ENCODE measurements at regions of chr2 and their contacts with region 1.

Region 1: GRCh38 chr2:234135720-234136221 is 85.3 kb downstream of the SPP2 start:
- DNase-seq: peak; percentile 64
- H3K4me3 Mint-ChIP-seq: no peak overlapping the region
- H3K27ac Mint-ChIP-seq: peak overlapping the region; percentile 61
- H3K4me1 Mint-ChIP-seq: peaks cover 29% of the 10 kb centered on the region
- H3K27me3 Mint-ChIP-seq: peaks cover 11% of the 10 kb centered on the region

Region 2: DNA sequence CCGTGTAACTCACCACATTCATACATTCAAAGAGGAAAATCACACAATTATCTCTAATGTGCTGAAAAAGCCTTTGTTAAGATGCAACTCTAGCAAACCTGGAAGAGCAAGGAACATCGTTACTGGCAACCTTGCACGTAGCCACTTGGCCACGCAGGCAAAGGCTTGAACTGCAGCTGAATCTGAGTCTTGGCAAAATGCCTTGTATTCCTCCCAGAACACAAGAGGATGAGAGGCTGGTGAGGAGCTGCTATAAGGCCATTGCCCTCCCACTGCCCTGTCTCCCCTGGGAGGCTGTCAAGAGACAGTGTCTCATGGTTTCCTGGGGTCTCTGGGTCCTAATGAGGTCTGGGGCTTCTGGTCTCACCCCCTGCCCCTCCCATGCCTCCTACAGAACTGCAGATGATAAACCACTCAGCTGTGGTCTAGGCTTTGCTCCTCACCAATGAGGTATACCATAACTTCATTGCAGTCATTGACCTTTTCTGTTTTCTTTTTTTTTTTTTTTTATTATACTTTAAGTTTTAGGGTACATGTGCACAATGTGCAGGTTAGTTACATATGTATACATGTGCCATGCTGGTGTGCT is 56.1 kb after region 1 on chr2:
- CTCF ChIA-PET with region 1: no interaction called
- POLR2A ChIA-PET with region 1: no interaction called
- DNase-seq: no peak
- H3K4me3 Mint-ChIP-seq: no peak overlapping the region
- H3K27ac Mint-ChIP-seq: no peak overlapping the region
- H3K4me1 Mint-ChIP-seq: peaks cover 2% of the 10 kb centered on the region
- H3K27me3 Mint-ChIP-seq: peaks cover 18% of the 10 kb centered on the region

Region 3: DNA sequence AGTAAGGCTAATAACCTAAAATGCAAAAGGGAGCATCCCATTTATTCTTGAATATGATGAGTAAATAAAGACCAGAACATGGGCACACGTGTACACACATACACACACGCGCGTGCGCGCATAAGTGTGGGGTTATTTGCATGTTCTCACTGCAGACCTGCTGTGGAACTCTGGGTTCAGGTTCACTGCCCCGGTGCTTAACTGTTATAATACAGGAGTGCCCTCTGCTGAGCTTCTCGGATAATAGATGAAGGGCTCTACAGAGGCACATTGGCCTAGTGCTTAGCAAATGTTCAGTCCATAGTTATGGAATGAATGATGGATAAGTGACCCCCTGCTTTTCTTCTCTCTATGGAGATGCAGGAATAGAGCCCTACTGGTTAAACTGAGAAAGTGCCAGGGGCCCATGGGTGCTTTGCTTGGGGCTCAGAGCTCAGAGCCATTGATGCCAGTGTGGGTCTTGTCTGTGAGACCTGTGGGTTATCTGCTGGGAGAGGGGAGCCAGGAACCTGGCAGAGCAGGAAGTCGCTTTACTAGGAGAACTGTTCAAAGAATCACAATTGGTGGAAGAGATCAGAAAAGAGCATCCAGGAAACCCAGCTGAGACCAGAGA is 364.7 kb after region 1 on chr2:
- CTCF ChIA-PET with region 1: interaction called, 28 read pairs
- POLR2A ChIA-PET with region 1: no interaction called
- DNase-seq: peak; percentile 85
- H3K4me3 Mint-ChIP-seq: peak overlapping the region; percentile 25
- H3K27ac Mint-ChIP-seq: peak overlapping the region; percentile 60
- H3K4me1 Mint-ChIP-seq: peaks cover 32% of the 10 kb centered on the region
- H3K27me3 Mint-ChIP-seq: peaks cover 10% of the 10 kb centered on the region

Measured in activated CD4-positive, alpha-beta T cell treated with anti-CD3 and anti-CD28 coated beads, Interleukin-2, amount 10 ng/mL, durations not matched to agents 7 days and 5 days (primary cell).